HAP-1 (cell line): ENCODE measurements at regions of chr18 and their contacts with region 1.

Region 1: DNA sequence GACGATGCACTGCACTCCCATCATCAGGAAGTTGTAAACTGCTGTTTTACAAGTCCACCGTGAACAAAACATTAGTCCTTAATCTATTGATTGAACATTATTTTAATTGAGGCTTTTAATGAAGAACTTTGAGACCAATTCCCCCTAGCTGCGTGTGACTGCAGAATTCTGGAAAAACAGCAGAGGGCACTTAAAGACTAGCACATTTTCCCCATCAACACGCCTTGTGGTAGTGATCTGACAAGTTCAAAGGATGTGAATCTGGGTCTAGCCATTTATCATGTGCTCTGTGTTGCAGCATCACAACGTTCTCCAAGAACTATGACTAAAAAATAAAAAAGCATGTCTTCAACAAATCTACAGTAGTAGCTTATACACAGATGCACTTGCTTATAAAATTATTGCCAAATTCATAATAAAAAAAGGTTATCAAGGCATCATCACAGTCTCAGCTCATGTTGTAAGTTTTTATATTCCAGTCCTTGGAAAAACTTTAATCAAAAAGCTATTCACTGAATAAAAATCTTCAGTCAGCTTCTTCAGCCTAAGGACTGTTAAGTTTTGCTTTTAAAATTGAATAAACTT is 35.8 kb downstream of the SKOR2 start:
- DNase-seq: peak; percentile 27 to 32
- H3K4me3 ChIP-seq: no peak overlapping the region
- H3K4me1 ChIP-seq: no peaks in the 10 kb centered on the region
- H3K27me3 ChIP-seq: peaks cover 22% of the 10 kb centered on the region

Region 2: DNA sequence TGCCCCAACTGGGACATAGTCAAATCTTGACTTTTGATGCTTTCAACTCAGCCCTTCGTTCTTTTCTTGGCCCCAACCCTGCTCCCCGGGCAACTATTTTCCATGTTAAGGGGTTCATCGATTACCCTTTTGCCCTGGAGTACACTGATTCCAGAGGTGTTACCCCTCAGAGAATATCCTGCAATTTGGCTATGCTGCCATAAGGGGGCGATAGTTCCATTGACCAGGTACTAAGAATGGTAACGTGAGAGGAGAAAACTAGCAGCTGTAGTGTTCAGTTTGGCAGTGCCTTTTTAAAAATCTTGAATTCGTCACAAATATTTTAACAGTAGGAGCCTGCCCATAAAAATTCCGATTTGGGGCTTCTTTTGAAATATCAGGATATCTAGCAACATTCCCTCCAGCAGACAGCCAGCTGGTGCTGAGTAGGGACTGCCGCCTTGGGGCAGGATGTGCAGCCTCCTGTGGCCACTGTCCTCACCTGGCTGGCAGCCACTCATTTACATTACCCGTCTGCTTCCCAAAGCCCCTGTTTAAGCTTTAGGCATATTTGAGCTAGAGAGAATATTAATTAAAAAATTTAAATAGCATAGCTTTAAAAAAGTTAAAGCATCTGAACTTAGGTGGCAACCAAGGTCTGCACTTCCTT is 182.1 kb after region 1 on chr18:
- in situ Hi-C with region 1: no loop called
- DNase-seq: peak in 1 of 2 experiments; percentile 19
- H3K4me3 ChIP-seq: no peak overlapping the region
- H3K4me1 ChIP-seq: no peaks in the 10 kb centered on the region
- H3K27me3 ChIP-seq: no peaks in the 10 kb centered on the region

Region 3: GRCh38 chr18:47748847-47749599 is 533.4 kb after region 1 on chr18:
- in situ Hi-C with region 1: loop called (anchors 5 kb)
- DNase-seq: peak; percentile 52 to 81
- H3K4me3 ChIP-seq: peak overlapping the region; percentile 19
- H3K4me1 ChIP-seq: no peaks in the 10 kb centered on the region
- H3K27me3 ChIP-seq: no peaks in the 10 kb centered on the region